Ascending aorta (tissue), 2 donors: ENCODE measurements at regions of chr4 and their contacts with region 1.

Region 1: DNA sequence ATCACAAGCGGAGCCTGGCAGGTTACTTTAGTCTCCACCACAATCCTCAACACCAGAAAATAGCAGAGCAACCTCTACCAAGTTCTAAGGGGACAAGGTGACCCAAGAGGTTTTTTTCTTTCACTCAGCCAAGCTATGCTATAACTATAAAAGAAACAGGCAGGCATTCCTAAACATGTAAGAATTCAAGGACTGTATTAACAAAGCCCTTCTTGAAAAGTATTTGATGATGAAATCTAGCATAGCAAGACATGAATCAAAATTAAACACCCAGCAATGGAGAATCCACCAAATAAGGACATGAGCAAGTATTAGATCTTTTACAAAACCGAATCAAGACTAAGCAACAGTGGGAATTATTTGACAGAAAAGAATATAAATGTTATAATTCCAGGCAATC is 25.7 kb upstream of the C1QTNF7 start:
- DNase-seq: no peak
- H3K4me3 ChIP-seq: peak overlapping the region; percentile 15 to 19
- H3K27ac ChIP-seq: peak overlapping the region; percentile 82 to 90
- H3K4me1 ChIP-seq: peaks cover 15 to 75% of the 10 kb centered on the region in 2 donors
- H3K27me3 ChIP-seq: no peaks in the 10 kb centered on the region
- CTCF ChIP-seq: no peak

Region 2: DNA sequence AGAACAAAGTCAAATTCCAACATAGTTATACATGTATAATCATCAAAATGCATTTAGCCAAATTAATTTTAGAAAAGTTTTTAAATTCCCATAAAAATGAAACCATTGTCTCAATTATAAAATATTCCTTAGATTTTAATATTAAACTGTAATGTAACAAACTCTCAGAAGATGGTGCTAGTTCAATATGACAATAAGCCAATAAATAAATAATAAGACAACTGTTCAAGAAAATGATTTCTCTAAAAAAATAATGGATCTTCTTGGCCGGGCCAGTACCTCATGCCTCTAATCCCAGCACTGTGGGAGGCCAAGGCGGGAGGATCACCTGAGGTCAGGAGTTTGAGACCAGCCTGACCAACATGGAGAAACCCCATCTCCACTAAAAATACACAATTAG is 1998.3 kb before region 1 on chr4:
- intact Hi-C with region 1: no loop called
- DNase-seq: no peak
- H3K4me3 ChIP-seq: no peak overlapping the region
- H3K27ac ChIP-seq: no peak overlapping the region
- H3K4me1 ChIP-seq: no peaks in the 10 kb centered on the region
- H3K27me3 ChIP-seq: no peaks in the 10 kb centered on the region
- CTCF ChIP-seq: no peak

Region 3: DNA sequence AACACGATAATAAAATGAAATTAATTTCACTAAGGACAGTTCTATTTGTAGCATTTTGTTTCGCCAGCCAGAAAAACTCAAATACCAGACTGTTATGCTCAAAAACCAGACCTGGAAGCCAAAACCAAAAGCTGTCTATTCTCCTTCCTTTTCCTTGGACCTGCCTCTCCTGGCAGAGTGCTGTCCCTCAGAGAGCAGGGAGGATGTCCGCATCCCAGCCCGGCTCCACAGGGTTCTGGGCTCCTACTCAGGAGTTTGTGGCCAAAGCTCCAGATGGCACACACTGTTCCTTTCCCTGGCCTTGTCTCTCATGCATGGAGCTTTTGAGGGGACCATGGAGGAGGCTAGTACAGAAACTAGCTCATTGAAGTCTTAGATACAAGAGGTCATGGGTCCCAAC is 16.2 kb before region 1 on chr4:
- intact Hi-C with region 1: loop called (anchors 2 kb)
- DNase-seq: peak in 1 of 2 donors; percentile 81
- H3K4me3 ChIP-seq: peak overlapping the region in 1 of 2 donors; percentile 50
- H3K27ac ChIP-seq: peak overlapping the region; percentile 75 to 86
- H3K4me1 ChIP-seq: peaks cover 13 to 50% of the 10 kb centered on the region in 2 donors
- H3K27me3 ChIP-seq: no peaks in the 10 kb centered on the region
- CTCF ChIP-seq: no peak

Region 4: GRCh38 chr4:15428611-15429010 is 26.5 kb after region 1 on chr4:
- intact Hi-C with region 1: loop called (anchors 2 kb)
- DNase-seq: no peak
- H3K4me3 ChIP-seq: peak overlapping the region; percentile 38 to 52
- H3K27ac ChIP-seq: peak overlapping the region; percentile 74 to 82
- H3K4me1 ChIP-seq: peaks cover 6 to 28% of the 10 kb centered on the region in 2 donors
- H3K27me3 ChIP-seq: no peaks in the 10 kb centered on the region
- CTCF ChIP-seq: no peak